CD8-positive, alpha-beta memory T cell (primary cell): ENCODE measurements at regions of chr7 and their contacts with region 1.

Region 1: GRCh38 chr7:149005241-149006050 is 22.9 kb downstream of the PDIA4 start:
- DNase-seq: peak; percentile 64 to 88 (median 78)
- H3K4me3 ChIP-seq: no peak overlapping the region
- H3K4me3 Mint-ChIP-seq: no peak overlapping the region
- H3K27ac ChIP-seq: no peak overlapping the region
- H3K27ac Mint-ChIP-seq: peak overlapping the region in 7 of 8 donors; percentile 25 to 93 (median 85)
- H3K4me1 ChIP-seq: peaks cover 6% of the 10 kb centered on the region
- H3K4me1 Mint-ChIP-seq: peaks cover 0 to 5% (median 3%) of the 10 kb centered on the region in 3 donors
- H3K27me3 ChIP-seq: no peaks in the 10 kb centered on the region
- H3K27me3 Mint-ChIP-seq: no peaks in the 10 kb centered on the region

Region 2: GRCh38 chr7:149028346-149029109 is 23.1 kb after region 1 on chr7 and contains the start of gene PDIA4:
- CTCF ChIA-PET with region 1: interaction called, 37 read pairs
- POLR2A ChIA-PET with region 1: no interaction called
- DNase-seq: peak; percentile 99 to 100 (median 99)
- H3K4me3 ChIP-seq: peak within 1 kb of the TSS; percentile 75
- H3K4me3 Mint-ChIP-seq: peak within 1 kb of the TSS; percentile 87 to 96 (median 92)
- H3K27ac ChIP-seq: peak within 1 kb of the TSS; percentile 88
- H3K27ac Mint-ChIP-seq: peak within 1 kb of the TSS; percentile 84 to 98 (median 97)
- H3K4me1 ChIP-seq: peaks cover 30% of the 10 kb centered on the region
- H3K4me1 Mint-ChIP-seq: peaks cover 40 to 50% (median 48%) of the 10 kb centered on the region in 3 donors
- H3K27me3 ChIP-seq: no peaks in the 10 kb centered on the region
- H3K27me3 Mint-ChIP-seq: peaks cover 0 to 1% of the 10 kb centered on the region in 2 donors
- total RNA-seq, gene PDIA4: 91.1 to 92.1 TPM

Region 3: GRCh38 chr7:149090397-149091195 is 85.2 kb after region 1 on chr7 and contains the start of gene ZNF786:
- CTCF ChIA-PET with region 1: interaction called, 11 read pairs
- POLR2A ChIA-PET with region 1: interaction called, 3 read pairs
- DNase-seq: peak; percentile 88 to 93 (median 91)
- H3K4me3 ChIP-seq: peak within 1 kb of the TSS; percentile 53
- H3K4me3 Mint-ChIP-seq: peak within 1 kb of the TSS; percentile 88 to 99 (median 94)
- H3K27ac ChIP-seq: peak within 1 kb of the TSS; percentile 87
- H3K27ac Mint-ChIP-seq: peak within 1 kb of the TSS; percentile 88 to 100 (median 100)
- H3K4me1 ChIP-seq: peaks cover 4% of the 10 kb centered on the region
- H3K4me1 Mint-ChIP-seq: peaks cover 27 to 38% (median 31%) of the 10 kb centered on the region in 3 donors
- H3K27me3 ChIP-seq: no peaks in the 10 kb centered on the region
- H3K27me3 Mint-ChIP-seq: no peaks in the 10 kb centered on the region
- total RNA-seq, gene ZNF786: 8.5 to 9.2 TPM